ENCODE measurements at regions of chr6 and their contacts with region 1.

Region 1: GRCh38 chr6:106444777-106445507 is 84.4 kb downstream of the CRYBG1 start:
- DNase-seq: peak; percentile 32
- H3K4me3 ChIP-seq: no peak overlapping the region
- H3K27ac ChIP-seq: no peak overlapping the region
- H3K27me3 ChIP-seq: peaks cover 7% of the 10 kb centered on the region
- CTCF ChIP-seq: peak; percentile 80

Region 2: DNA sequence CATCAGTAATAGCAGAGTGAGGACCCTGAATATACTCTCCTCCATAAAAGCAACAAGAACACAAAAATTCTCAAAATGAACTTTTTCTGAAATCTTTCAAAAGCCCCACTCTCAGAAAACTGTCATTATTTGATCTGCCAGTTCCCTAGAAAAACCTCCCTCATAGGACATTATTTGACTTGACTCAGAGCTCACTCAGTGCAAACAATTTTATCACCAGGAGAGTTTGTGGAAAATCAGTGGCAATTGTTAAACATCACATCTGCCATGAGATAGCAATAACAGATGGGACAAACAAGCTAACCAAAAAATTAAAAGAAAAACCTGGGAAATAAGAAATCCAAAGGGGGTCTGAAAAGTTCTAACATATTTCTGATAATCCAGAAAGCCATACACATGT is 219.4 kb before region 1 on chr6:
- CTCF ChIA-PET with region 1: no interaction called
- POLR2A ChIA-PET with region 1: no interaction called
- DNase-seq: no peak
- H3K4me3 ChIP-seq: no peak overlapping the region
- H3K27ac ChIP-seq: no peak overlapping the region
- H3K27me3 ChIP-seq: no peaks in the 10 kb centered on the region
- CTCF ChIP-seq: no peak

Region 3: DNA sequence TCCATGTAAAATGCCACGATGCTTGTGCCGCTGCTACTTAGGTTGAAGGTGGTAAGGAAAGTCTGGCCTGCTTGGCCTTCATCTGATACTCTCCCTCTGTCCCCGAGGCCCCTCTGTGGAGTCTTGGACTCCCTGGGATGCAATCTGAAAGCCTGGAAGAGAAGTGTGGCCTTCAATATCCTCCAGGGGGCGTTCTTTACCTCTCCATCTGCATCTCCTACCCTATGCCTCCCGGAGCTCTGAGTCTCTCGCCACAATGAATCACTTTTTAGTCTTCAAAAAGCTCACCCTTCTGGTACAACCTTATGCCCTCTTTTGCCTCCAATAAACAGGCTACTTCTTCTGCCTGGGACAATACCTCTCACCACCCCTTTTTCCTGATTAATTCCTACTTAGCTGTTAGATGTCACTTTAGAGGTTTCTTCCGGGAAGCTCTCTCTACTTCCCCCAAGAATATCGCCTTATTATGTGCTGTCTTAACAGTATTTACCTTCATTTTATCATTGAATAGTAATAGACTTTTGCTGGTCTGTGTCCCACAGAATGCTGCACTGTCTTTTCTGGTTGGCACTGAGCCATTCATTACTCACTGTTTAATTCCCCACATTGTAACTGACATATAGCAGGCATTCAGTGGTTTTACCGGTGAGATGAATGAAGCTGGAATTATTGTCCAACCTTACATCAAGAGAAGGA is 105.5 kb before region 1 on chr6:
- CTCF ChIA-PET with region 1: interaction called, 10 read pairs
- POLR2A ChIA-PET with region 1: no interaction called
- DNase-seq: peak; percentile 24
- H3K4me3 ChIP-seq: no peak overlapping the region
- H3K27ac ChIP-seq: no peak overlapping the region
- H3K27me3 ChIP-seq: no peaks in the 10 kb centered on the region
- CTCF ChIP-seq: peak; percentile 86

Region 4: DNA sequence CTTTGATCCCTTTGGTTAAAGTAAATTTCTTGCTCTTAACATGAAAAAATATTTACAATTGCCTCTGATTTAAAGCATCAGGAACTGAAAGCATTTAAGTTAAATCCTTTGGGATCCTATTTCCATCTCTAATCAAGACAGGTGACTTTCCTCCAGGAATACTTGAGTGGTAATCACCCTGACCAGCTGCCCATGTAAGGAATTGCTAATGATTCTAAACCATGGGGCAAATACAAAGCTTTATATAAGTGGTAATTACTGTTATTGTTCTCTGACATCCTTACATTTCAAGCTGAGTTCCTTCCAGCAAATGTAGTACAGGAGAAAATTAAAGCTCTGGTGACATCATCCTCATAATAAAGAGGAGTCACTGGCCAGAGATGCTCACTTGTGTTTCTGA is 16.1 kb after region 1 on chr6:
- CTCF ChIA-PET with region 1: interaction called, 14 read pairs
- POLR2A ChIA-PET with region 1: no interaction called
- DNase-seq: no peak
- H3K4me3 ChIP-seq: no peak overlapping the region
- H3K27ac ChIP-seq: no peak overlapping the region
- H3K27me3 ChIP-seq: peaks cover 9% of the 10 kb centered on the region
- CTCF ChIP-seq: no peak

Region 5: DNA sequence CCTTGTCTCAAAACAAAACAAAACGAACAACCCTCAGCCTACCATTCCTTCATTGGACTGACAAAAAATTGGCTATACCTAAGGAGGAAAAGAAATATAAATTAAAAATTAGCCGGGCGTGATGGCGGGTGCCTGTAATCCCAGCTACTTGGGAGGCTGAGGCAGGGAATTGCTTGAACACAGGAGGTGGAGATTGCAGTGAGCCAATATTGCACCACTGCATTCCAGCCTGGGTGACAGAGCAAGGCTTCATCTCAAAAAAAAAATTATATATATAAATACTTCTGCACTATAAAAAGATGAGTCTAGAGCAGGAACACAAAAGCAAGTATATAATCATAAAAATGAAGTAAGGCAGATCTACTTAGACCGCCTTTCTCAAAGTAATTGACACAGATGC is 25.4 kb after region 1 on chr6:
- CTCF ChIA-PET with region 1: interaction called, 14 read pairs
- POLR2A ChIA-PET with region 1: no interaction called
- DNase-seq: no peak
- H3K4me3 ChIP-seq: no peak overlapping the region
- H3K27ac ChIP-seq: no peak overlapping the region
- H3K27me3 ChIP-seq: peaks cover 3% of the 10 kb centered on the region
- CTCF ChIP-seq: no peak

Region 6: GRCh38 chr6:106530502-106530901 is 85.6 kb after region 1 on chr6:
- CTCF ChIA-PET with region 1: no interaction called
- POLR2A ChIA-PET with region 1: no interaction called
- DNase-seq: no peak
- H3K4me3 ChIP-seq: no peak overlapping the region
- H3K27ac ChIP-seq: no peak overlapping the region
- H3K27me3 ChIP-seq: no peaks in the 10 kb centered on the region
- CTCF ChIP-seq: no peak

Region 7: DNA sequence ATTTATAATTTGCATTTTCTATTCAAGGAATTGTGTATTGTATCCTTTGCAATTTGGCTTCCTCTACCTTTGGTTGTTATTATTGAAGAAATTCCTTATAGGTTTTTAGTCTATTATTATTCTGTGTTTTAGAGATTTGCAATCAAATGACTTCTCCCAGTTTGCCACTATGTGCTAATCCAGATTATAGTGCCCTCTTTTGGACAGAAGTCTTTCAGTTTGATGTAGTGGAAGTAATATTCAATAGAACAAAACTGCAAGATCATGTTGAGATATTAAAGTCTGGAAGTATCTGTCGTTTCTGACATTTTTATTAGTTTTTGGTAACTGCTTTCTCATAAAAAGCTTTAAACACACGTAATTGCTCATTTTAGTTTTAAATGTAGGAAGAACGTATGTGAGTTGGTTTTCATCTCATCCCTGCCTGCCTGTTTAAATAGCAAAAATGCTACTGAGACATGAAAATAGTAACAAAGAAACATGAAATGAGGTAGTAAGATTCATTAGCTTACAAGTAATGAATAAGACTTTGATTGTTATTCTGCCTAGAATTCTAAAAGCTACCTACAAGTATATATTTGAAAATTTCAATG is 111.5 kb after region 1 on chr6:
- CTCF ChIA-PET with region 1: interaction called, 462 read pairs
- POLR2A ChIA-PET with region 1: no interaction called
- DNase-seq: no peak
- H3K4me3 ChIP-seq: no peak overlapping the region
- H3K27ac ChIP-seq: no peak overlapping the region
- H3K27me3 ChIP-seq: no peaks in the 10 kb centered on the region
- CTCF ChIP-seq: peak; percentile 52

Region 8: DNA sequence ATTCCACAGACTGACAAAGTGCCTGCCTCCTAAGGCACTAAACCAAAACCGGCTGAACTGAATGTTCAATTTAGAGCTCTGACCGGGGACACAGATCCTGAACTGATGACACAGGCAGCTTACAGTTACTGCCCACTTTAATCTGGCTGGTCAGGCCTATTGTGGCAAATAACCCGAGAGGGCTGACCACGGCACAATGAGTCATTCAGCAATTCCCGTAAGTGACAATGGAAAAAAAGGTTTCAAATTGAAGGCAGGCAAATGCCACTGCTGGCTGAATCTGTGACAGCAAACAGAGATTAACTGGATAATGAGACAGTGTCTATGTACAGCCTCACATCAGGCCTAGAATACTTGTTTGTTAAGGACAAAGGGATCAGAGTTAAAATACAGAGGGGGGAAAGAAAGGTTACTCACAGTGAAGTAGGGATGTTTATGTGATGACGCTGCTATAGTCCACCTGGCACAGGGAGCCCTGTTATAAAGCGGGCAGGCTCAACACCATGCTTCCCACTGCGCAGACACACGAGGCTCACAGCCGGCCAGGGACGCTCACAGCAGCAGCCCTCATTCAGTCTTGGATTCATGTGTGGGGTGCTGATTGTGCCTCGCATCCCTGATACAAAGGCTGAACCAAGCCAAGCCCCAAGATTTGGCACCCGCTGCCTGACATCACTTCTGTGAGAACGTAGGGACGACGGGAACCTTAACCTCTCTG is 130.0 kb after region 1 on chr6:
- CTCF ChIA-PET with region 1: interaction called, 462 read pairs
- POLR2A ChIA-PET with region 1: no interaction called
- DNase-seq: no peak
- H3K4me3 ChIP-seq: no peak overlapping the region
- H3K27ac ChIP-seq: no peak overlapping the region
- H3K27me3 ChIP-seq: no peaks in the 10 kb centered on the region
- CTCF ChIP-seq: no peak

Region 9: DNA sequence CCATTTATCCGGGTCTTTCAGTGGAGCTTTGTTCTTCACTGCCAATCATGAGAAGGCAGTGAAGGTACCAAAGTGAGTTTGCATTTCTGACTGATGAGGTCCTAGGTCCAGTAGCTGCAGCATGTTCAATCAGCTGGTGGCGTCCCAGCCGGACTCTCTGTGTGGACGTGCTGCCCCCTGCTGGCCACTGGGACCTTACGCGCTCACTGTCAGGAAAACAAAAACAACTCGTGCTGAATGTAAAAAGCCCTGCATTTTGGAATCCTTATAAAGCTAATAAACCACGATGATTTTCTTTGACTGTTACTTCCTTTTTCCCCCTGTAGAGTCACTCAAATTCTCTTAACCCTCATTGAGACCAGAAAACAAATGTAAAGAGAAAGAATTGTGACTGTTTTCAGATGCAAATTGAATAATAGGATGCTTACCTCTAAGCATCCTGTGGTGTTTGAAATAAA is 534.5 kb after region 1 on chr6:
- CTCF ChIA-PET with region 1: interaction called, 70 read pairs
- POLR2A ChIA-PET with region 1: no interaction called
- DNase-seq: peak; percentile 55
- H3K4me3 ChIP-seq: peak overlapping the region; percentile 1; the same call in 1 of the 2 replicates
- H3K27ac ChIP-seq: no peak overlapping the region
- H3K27me3 ChIP-seq: peaks cover 25% of the 10 kb centered on the region
- CTCF ChIP-seq: peak; percentile 98

Measured in AG04450 (cell line).